Activated CD4-positive, alpha-beta memory T cell treated with anti-CD3 and anti-CD28 coated beads, Interleukin-2, amount 10 ng/mL, durations not matched to agents 7 days and 5 days (primary cell): ENCODE measurements at regions of chr4 and their contacts with region 1.

Region 1: GRCh38 chr4:68375667-68376559 is 26.0 kb upstream of the YTHDC1 start:
- DNase-seq: peak; percentile 44
- H3K4me3 Mint-ChIP-seq: peak overlapping the region; percentile 64
- H3K27ac Mint-ChIP-seq: no peak overlapping the region
- H3K4me1 Mint-ChIP-seq: peaks cover 20% of the 10 kb centered on the region
- H3K27me3 Mint-ChIP-seq: peaks cover 6% of the 10 kb centered on the region

Region 2: GRCh38 chr4:68271851-68272756 is 103.8 kb before region 1 on chr4:
- CTCF ChIA-PET with region 1: interaction called, 72 read pairs
- POLR2A ChIA-PET with region 1: no interaction called
- DNase-seq: no peak
- H3K4me3 Mint-ChIP-seq: no peak overlapping the region
- H3K27ac Mint-ChIP-seq: no peak overlapping the region
- H3K4me1 Mint-ChIP-seq: peaks cover 13% of the 10 kb centered on the region
- H3K27me3 Mint-ChIP-seq: peaks cover 10% of the 10 kb centered on the region

Region 3: GRCh38 chr4:68361146-68361589 is 14.7 kb before region 1 on chr4:
- CTCF ChIA-PET with region 1: interaction called, 18 read pairs
- POLR2A ChIA-PET with region 1: no interaction called
- DNase-seq: no peak
- H3K4me3 Mint-ChIP-seq: no peak overlapping the region
- H3K27ac Mint-ChIP-seq: no peak overlapping the region
- H3K4me1 Mint-ChIP-seq: peaks cover 9% of the 10 kb centered on the region
- H3K27me3 Mint-ChIP-seq: peaks cover 8% of the 10 kb centered on the region